B cell (primary cell): ENCODE measurements at regions of chr15 and their contacts with region 1.

Region 1: DNA sequence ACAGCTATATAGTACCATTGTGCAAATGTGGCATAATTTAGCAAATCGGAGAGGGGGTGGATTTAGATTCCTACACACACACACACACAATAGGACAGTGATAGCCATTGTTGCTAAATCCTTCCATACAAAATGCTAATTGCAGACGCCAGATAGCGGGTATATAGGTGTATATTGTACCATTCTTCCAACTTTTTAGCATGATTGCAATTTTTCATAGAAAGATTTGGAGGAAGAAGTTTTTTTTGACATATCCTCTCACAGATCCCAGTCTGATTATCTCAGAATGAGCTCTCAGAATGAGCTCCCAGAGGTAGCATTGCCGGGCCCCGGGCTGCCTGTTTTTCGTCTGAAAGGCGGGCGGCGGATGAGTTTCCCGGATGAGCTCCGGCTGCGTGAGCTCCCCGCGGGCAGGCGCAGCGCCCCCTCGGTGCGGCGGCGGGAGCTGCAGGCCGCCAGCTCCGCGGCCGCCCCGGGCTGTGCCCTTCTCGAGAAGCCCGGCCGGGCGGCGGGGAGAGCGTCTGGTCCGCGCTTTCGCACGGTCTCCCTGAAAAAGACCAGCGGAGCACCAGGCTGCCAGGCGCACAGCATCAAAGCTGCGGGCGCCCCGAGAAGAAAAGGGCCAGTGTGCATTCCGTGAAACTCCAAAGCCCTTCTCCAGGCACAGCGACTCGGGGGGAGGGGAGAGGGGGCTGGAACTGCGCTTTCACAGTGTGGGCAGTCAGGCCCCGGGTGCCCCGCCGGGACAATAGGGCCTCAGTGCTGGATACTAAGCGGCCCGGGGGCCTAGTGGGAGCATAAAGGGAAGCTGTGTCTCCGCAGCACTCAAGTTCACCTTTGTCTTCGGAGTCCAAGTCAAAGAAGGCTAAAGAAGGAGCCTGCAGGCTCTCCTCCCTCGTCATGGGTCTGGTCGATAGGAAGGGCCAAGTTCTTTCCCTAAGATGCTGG is 12.0 kb upstream of the SHC4 start:
- DNase-seq: peak; percentile 78
- ATAC-seq: peak; percentile 96
- H3K4me3 ChIP-seq: peak overlapping the region in 4 of 5 experiments; percentile 27 to 53 (median 50)
- H3K4me3 Mint-ChIP-seq: peak overlapping the region; percentile 78
- H3K27ac ChIP-seq: no peak overlapping the region
- H3K27ac Mint-ChIP-seq: no peak overlapping the region
- H3K4me1 ChIP-seq: peaks cover 5 to 8% of the 10 kb centered on the region in 2 donors
- H3K4me1 Mint-ChIP-seq: peaks cover 5% of the 10 kb centered on the region
- H3K27me3 ChIP-seq: peaks cover 0 to 23% (median 10%) of the 10 kb centered on the region in 4 experiments
- H3K27me3 Mint-ChIP-seq: peaks cover 46% of the 10 kb centered on the region
- CTCF ChIP-seq: peak; percentile 97

Region 2: DNA sequence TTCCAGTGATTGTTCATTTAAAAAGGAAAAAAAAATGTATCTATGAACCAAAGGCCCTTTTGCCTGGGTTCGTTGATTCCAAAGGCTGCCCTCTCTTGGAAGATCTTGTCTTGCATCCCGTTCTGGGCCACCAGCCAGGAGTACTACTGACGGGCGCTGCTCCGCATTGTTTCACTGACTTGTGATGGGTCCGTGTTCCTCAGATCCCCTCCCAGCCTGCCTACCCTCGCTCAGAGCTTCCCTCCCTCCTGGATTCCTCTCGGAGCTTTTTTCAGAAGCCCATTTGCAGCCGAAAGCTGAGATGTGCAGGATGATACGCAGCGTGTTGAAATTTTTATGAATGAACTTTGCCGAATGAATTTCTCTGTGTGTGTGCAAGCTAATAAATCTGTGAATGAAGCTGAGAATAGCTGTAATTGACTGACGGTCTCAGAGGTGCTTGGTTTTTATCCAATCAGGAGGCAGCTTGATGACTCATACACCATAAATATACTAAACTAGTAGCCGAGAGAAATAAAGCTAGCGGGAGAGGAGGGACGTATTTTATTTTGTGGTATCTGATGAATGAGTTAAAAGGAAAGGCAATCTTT is 12.1 kb before region 1 on chr15 and contains the start of gene SHC4:
- CTCF ChIA-PET with region 1: interaction called, 38 read pairs
- POLR2A ChIA-PET with region 1: no interaction called
- intact Hi-C with region 1: no loop called
- DNase-seq: peak; percentile 10
- ATAC-seq: peak; percentile 39
- H3K4me3 ChIP-seq: peak within 1 kb of the TSS in 4 of 5 experiments; percentile 30 to 53 (median 40)
- H3K4me3 Mint-ChIP-seq: peak within 1 kb of the TSS; percentile 80
- H3K27ac ChIP-seq: no peak within 1 kb of the TSS
- H3K27ac Mint-ChIP-seq: no peak within 1 kb of the TSS
- H3K4me1 ChIP-seq: peaks cover 21 to 23% of the 10 kb centered on the region in 2 donors
- H3K4me1 Mint-ChIP-seq: peaks cover 19% of the 10 kb centered on the region
- H3K27me3 ChIP-seq: peaks cover 0 to 61% (median 26%) of the 10 kb centered on the region in 4 experiments
- H3K27me3 Mint-ChIP-seq: peaks cover 57% of the 10 kb centered on the region
- CTCF ChIP-seq: no peak
- total RNA-seq, gene SHC4: 0.69 and 0.75 TPM in 2 replicates

Region 3: DNA sequence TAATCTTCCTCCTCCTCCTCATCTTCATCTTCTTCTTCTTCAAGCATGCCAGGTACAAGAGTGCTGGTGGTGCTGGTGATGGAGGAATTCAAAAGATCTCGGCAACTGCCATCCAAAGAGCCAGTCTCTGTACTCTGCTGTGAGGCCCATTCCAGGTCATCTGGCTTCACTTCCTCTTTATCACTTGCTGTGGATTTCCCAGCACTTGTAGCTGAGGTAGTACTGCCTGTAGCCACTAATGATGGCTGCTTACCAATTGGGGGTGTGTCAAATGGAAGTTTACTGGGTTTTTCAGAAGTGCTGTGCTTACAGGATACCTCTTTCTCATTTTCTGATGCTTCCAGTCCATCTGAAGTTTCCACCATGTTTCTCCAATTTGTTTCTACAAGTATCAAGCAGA is 16.8 kb after region 1 on chr15:
- CTCF ChIA-PET with region 1: interaction called, 15 read pairs
- POLR2A ChIA-PET with region 1: no interaction called
- intact Hi-C with region 1: no loop called
- DNase-seq: peak; percentile 42
- ATAC-seq: peak; percentile 51
- H3K4me3 ChIP-seq: no peak overlapping the region
- H3K4me3 Mint-ChIP-seq: no peak overlapping the region
- H3K27ac ChIP-seq: no peak overlapping the region
- H3K27ac Mint-ChIP-seq: no peak overlapping the region
- H3K4me1 ChIP-seq: no peaks in the 10 kb centered on the region
- H3K4me1 Mint-ChIP-seq: peaks cover 4% of the 10 kb centered on the region
- H3K27me3 ChIP-seq: no peaks in the 10 kb centered on the region
- H3K27me3 Mint-ChIP-seq: no peaks in the 10 kb centered on the region
- CTCF ChIP-seq: no peak